GM13976 (cell line): ENCODE measurements at regions of chr13 and their contacts with region 1.

Region 1: GRCh38 chr13:53759021-53759420 is 730.4 kb downstream of the OLFM4 start:
- DNase-seq: no peak
- CTCF ChIP-seq: no peak

Region 2: GRCh38 chr13:53250266-53250875 is 508.6 kb before region 1 on chr13:
- in situ Hi-C with region 1: loop called (anchors 25 kb)
- DNase-seq: peak; percentile 33
- CTCF ChIP-seq: peak; percentile 48

Region 3: DNA sequence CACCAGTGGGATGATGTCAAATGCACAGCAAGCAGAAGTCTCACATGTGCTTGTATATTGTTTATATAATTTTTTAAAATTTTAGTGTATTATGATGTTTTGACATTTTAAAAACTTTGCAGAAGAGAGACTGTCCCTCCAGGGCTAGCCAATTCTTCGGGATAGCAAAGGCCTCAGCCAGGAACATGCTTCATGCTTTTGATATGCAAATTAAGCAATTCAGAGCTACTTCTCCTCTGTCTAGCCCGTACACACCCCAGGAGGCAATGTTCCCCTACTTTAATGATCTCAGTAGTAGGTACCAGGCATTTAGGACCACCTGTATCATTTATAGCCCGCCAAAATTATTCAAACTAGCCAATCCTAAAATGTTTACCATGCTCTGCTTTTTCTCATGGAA is 385.8 kb after region 1 on chr13:
- in situ Hi-C with region 1: no loop called
- DNase-seq: no peak
- CTCF ChIP-seq: no peak